Activated CD4-positive, alpha-beta memory T cell treated with anti-CD3 and anti-CD28 coated beads, Interleukin-2, amount 10 ng/mL, durations not matched to agents 7 days and 5 days (primary cell): ENCODE measurements at regions of chr4 and their contacts with region 1.

Region 1: DNA sequence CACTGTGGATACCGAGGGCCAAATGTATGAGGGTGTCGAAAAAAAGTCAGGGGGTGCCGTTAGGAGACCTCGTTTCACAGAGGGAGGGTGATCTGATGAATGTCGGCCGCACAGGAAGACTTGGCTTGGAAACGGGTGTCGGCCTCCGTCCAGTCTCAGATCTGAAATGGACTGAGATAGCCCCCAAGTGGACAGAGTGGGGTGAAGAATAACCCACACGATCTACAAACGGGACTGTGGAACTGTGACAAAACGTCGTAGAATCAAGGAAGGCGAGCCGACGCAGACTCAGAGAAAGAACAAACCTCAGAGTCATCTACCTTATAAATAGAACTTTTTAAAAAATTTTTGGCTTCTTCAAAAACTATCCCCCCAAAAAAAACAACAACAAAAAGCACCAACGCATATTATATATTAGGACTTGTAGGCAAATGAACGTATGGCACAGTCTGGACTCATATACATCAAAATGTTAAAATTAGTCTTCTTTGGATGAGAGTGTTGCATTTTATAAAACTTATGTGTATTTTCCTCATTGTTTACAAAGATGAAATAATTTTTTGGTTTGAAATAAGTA is 63.8 kb upstream of the IRF2 start:
- DNase-seq: peak; percentile 72
- H3K4me3 Mint-ChIP-seq: peak overlapping the region; percentile 85
- H3K27ac Mint-ChIP-seq: peak overlapping the region; percentile 88
- H3K4me1 Mint-ChIP-seq: peaks cover 49% of the 10 kb centered on the region
- H3K27me3 Mint-ChIP-seq: no peaks in the 10 kb centered on the region

Region 2: GRCh38 chr4:184384056-184384809 is 153.9 kb before region 1 on chr4:
- CTCF ChIA-PET with region 1: interaction called, 4 read pairs
- POLR2A ChIA-PET with region 1: interaction called, 11 read pairs
- DNase-seq: peak; percentile 55
- H3K4me3 Mint-ChIP-seq: peak overlapping the region; percentile 32
- H3K27ac Mint-ChIP-seq: peak overlapping the region; percentile 79
- H3K4me1 Mint-ChIP-seq: peaks cover 61% of the 10 kb centered on the region
- H3K27me3 Mint-ChIP-seq: no peaks in the 10 kb centered on the region

Region 3: GRCh38 chr4:184417802-184418511 is 120.2 kb before region 1 on chr4:
- CTCF ChIA-PET with region 1: interaction called, 5 read pairs
- POLR2A ChIA-PET with region 1: interaction called, 17 read pairs
- DNase-seq: peak; percentile 36
- H3K4me3 Mint-ChIP-seq: peak overlapping the region; percentile 77
- H3K27ac Mint-ChIP-seq: peak overlapping the region; percentile 98
- H3K4me1 Mint-ChIP-seq: peaks cover 92% of the 10 kb centered on the region
- H3K27me3 Mint-ChIP-seq: no peaks in the 10 kb centered on the region

Region 4: DNA sequence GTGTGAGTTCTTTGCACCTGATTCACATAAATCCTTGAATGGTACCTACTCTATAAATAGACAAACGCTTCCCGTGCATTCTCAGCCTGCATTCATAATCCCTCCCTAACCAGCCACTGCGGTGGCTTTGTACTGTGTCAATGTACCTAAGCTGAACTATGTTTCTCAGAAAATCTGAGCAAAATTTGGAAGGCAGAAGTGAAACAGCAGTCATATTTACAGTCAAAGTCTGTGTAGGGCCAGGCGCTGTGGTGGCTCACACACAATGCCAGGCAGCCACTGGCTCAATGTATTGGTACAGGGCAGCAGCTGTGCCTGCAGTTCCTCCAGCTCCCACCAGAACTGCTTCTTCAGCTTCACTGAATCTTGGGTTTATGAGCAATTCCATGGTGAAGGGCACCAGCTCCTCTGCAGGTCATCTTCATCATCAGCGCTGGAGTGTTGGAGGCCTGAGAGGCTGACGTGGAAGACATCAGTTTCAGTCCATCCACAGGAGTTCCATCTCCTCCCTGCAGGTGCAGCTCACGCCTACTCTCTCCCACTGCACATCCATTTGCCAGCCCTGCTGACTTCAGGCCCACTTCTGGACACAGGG is 31.5 kb before region 1 on chr4:
- CTCF ChIA-PET with region 1: interaction called, 22 read pairs
- POLR2A ChIA-PET with region 1: interaction called, 96 read pairs
- DNase-seq: peak; percentile 47
- H3K4me3 Mint-ChIP-seq: no peak overlapping the region
- H3K27ac Mint-ChIP-seq: peak overlapping the region; percentile 50
- H3K4me1 Mint-ChIP-seq: peaks cover 41% of the 10 kb centered on the region
- H3K27me3 Mint-ChIP-seq: no peaks in the 10 kb centered on the region

Region 5: DNA sequence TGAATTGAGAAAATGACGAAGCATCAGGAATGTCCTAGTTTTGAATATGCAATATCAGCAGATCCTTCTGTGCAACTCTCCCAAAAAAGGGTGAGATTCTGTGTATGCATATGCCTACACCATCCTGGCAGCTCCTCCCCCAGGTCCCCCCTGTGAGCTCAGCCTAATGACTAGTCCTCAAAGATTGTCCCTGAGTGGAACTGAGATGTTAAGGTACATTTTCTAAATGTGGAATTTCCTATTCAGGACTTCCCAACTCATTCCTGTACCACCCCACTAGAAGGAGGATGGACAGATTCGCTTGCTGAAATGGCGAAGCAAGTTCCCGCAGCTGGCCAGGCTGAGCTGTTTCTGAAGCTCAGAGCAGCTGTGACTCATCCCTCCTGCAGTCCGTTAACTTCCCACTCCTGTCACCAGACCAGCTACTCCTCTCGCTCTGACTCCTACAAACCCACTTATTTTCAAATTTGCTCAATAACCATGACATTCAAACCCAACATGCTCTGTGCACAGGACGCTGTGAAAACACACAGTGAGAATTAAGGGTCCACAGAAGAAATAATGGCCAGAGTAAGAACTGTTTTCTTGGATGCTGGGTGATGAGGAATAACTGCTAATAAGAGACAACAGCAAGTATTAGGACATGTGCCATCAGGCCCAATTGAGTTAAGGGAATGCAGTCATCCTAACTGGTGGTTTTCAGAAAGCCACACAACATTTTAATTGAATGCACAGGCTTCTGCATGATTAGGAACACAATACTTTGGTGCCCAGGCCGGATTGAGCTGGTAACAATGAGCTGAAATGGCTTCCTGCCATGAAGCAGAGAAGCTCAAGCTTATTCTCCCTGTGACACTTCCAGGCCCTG is 23.8 kb before region 1 on chr4:
- CTCF ChIA-PET with region 1: interaction called, 12 read pairs
- POLR2A ChIA-PET with region 1: interaction called, 96 read pairs
- DNase-seq: peak; percentile 71
- H3K4me3 Mint-ChIP-seq: peak overlapping the region; percentile 32
- H3K27ac Mint-ChIP-seq: peak overlapping the region; percentile 89
- H3K4me1 Mint-ChIP-seq: peaks cover 47% of the 10 kb centered on the region
- H3K27me3 Mint-ChIP-seq: no peaks in the 10 kb centered on the region